ENCODE measurements at regions of chr3 and their contacts with region 1.

Region 1: DNA sequence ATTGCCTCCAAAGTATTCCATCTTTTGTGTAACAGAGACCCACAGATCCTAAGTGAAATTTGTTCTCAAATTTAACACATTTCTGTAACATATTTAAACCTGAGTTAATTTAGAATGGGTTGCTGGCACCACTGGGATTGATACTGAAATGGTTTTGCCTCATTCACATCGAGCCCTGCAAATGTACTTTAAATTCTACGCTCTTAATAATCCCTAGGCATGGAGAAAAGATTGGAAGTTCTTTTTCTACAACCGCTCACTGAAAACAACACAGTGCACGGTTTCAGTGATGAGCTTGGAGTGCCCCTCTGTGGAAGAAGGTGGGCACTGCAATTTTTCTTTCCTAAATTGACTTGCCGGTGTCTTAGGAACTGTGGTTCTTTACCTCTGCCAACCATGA is 109.9 kb upstream of the ATP11B start:
- DNase-seq: peak; percentile 68
- ATAC-seq: peak; percentile 95
- H3K4me3 ChIP-seq: no peak overlapping the region
- H3K27ac ChIP-seq: no peak overlapping the region
- H3K4me1 ChIP-seq: no peaks in the 10 kb centered on the region
- H3K27me3 ChIP-seq: peaks cover 4% of the 10 kb centered on the region
- CTCF ChIP-seq: peak; percentile 95
- POLR2A ChIP-seq: 0 out of 2 replicates have a peak, but pooled peaks have one; percentile 34
- RAD21 ChIP-seq: peak; percentile 96

Region 2: DNA sequence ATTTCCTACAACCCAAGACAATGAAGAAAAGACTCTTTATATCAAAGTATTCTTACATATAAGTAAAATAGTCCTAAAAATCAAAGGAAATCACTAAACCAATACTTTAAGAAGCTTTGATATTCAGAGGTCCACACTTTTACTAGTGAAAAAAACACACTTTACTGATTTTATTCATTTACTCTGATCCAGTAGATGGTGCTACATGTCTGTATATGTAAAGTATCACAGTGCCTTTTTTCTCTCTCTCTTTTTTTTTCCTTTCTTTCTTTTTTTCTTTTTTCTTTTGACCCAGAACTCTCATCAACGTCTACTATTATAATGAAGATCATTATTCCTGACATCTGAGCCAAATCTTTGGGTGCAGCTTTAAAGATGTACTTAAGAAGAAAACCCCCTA is 1993.4 kb before region 1 on chr3:
- CTCF ChIA-PET with region 1: no interaction called
- POLR2A ChIA-PET with region 1: no interaction called
- dilution Hi-C with region 1: no loop called
- in situ Hi-C with region 1: no loop called
- intact Hi-C with region 1: loop called (anchors 5 kb)
- DNase-seq: no peak
- ATAC-seq: no peak
- H3K4me3 ChIP-seq: no peak overlapping the region
- H3K27ac ChIP-seq: no peak overlapping the region
- H3K4me1 ChIP-seq: no peaks in the 10 kb centered on the region
- H3K27me3 ChIP-seq: no peaks in the 10 kb centered on the region
- CTCF ChIP-seq: no peak
- POLR2A ChIP-seq: no peak
- RAD21 ChIP-seq: no peak

Region 3: GRCh38 chr3:180802837-180803236 is 1880.6 kb before region 1 on chr3:
- CTCF ChIA-PET with region 1: no interaction called
- POLR2A ChIA-PET with region 1: no interaction called
- dilution Hi-C with region 1: no loop called
- in situ Hi-C with region 1: no loop called
- intact Hi-C with region 1: loop called (anchors 1 kb)
- DNase-seq: peak; percentile 4
- ATAC-seq: no peak
- H3K4me3 ChIP-seq: no peak overlapping the region
- H3K27ac ChIP-seq: no peak overlapping the region
- H3K4me1 ChIP-seq: no peaks in the 10 kb centered on the region
- H3K27me3 ChIP-seq: no peaks in the 10 kb centered on the region
- CTCF ChIP-seq: peak; percentile 49
- POLR2A ChIP-seq: no peak
- RAD21 ChIP-seq: peak; percentile 45

Region 4: GRCh38 chr3:180989291-180990163 is 1693.9 kb before region 1 on chr3 and contains the start of gene DNAJC19:
- CTCF ChIA-PET with region 1: no interaction called
- POLR2A ChIA-PET with region 1: no interaction called
- dilution Hi-C with region 1: no loop called
- in situ Hi-C with region 1: no loop called
- intact Hi-C with region 1: loop called (anchors 10 kb)
- DNase-seq: peak; percentile 97
- ATAC-seq: peak; percentile 99
- H3K4me3 ChIP-seq: peak within 1 kb of the TSS; percentile 79
- H3K27ac ChIP-seq: peak within 1 kb of the TSS; percentile 65
- H3K4me1 ChIP-seq: no peaks in the 10 kb centered on the region
- H3K27me3 ChIP-seq: no peaks in the 10 kb centered on the region
- CTCF ChIP-seq: no peak
- POLR2A ChIP-seq: no peak
- RAD21 ChIP-seq: no peak
- total RNA-seq, gene DNAJC19: 16.0 and 20.8 TPM in 2 replicates

Region 5: GRCh38 chr3:181210275-181210674 is 1473.2 kb before region 1 on chr3:
- CTCF ChIA-PET with region 1: no interaction called
- POLR2A ChIA-PET with region 1: no interaction called
- dilution Hi-C with region 1: no loop called
- in situ Hi-C with region 1: loop called (anchors 10 kb)
- intact Hi-C with region 1: loop called (anchors 1 kb)
- DNase-seq: peak; percentile 15
- ATAC-seq: no peak
- H3K4me3 ChIP-seq: no peak overlapping the region
- H3K27ac ChIP-seq: no peak overlapping the region
- H3K4me1 ChIP-seq: no peaks in the 10 kb centered on the region
- H3K27me3 ChIP-seq: no peaks in the 10 kb centered on the region
- CTCF ChIP-seq: 0 out of 2 replicates have a peak, but pooled peaks have one; percentile 30
- POLR2A ChIP-seq: no peak
- RAD21 ChIP-seq: peak; percentile 18; the same call in 1 of the 2 replicates

Region 6: DNA sequence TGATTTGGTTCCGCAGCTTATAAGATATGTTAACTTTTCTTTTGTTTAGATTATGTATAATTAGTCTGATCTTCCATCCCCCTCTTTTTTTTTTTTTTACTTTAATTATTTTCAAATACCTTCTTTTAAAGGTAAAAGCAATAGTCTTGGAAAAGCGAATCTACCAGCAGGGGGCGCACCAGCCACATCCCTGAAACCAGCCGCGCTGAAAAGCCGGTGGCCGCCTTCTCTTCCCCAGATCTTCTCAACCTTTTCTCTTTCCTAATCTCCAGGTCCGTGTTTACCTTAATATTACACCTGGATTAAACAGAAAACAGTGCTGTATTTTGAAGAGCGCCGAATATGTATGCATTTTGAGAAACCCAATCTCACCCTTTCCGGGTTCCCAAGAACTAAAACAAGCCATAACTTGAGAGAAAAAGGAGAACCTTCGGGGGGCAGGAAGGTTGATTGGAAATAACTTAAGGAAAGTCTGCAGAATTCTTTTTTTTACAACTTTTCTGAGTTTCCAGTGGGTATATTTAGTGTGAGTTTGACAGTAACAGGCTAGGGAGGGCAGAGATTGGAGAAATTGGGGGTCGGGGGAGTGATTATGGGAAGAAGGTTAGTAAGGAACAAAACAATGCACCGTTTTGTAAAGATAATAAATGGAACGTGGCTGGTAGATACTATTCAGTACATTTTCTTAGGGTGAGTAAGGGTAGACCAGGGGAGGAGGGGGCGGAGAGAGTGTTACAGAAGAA is 973.7 kb before region 1 on chr3:
- CTCF ChIA-PET with region 1: interaction called, 16 read pairs
- POLR2A ChIA-PET with region 1: no interaction called
- dilution Hi-C with region 1: no loop called
- in situ Hi-C with region 1: loop called (anchors 5 kb)
- intact Hi-C with region 1: loop called (anchors 1 kb)
- DNase-seq: peak; percentile 44
- ATAC-seq: peak; percentile 53; the same call in 1 of the 2 replicates
- H3K4me3 ChIP-seq: no peak overlapping the region
- H3K27ac ChIP-seq: no peak overlapping the region
- H3K4me1 ChIP-seq: no peaks in the 10 kb centered on the region
- H3K27me3 ChIP-seq: peaks cover 47% of the 10 kb centered on the region
- CTCF ChIP-seq: peak; percentile 73
- POLR2A ChIP-seq: no peak
- RAD21 ChIP-seq: peak; percentile 61

Region 7: DNA sequence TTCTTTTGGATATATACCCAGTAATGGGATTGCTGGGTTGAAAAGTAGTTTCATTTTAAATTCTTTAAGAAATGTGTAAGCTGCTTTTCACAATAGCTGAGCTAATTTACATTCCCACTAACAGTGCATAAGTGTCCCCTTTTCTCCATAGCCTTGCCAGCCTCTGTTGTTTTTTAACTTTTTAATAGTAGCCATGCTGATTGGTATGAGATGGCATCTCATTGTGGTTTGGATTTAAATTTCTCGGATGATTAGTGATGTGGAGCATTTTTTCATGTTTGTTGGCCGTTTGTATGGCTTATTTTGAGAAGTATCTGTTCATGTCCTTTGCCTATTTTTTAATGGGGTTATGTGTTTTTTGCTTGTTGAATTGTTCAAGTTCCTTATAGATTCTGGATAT is 334.4 kb before region 1 on chr3:
- CTCF ChIA-PET with region 1: no interaction called
- POLR2A ChIA-PET with region 1: no interaction called
- dilution Hi-C with region 1: no loop called
- in situ Hi-C with region 1: no loop called
- intact Hi-C with region 1: no loop called
- DNase-seq: no peak
- ATAC-seq: no peak
- H3K4me3 ChIP-seq: no peak overlapping the region
- H3K27ac ChIP-seq: no peak overlapping the region
- H3K4me1 ChIP-seq: no peaks in the 10 kb centered on the region
- H3K27me3 ChIP-seq: no peaks in the 10 kb centered on the region
- CTCF ChIP-seq: no peak
- POLR2A ChIP-seq: no peak
- RAD21 ChIP-seq: no peak

Region 8: GRCh38 chr3:183745300-183746098 is 1062.0 kb after region 1 on chr3:
- CTCF ChIA-PET with region 1: no interaction called
- POLR2A ChIA-PET with region 1: no interaction called
- dilution Hi-C with region 1: no loop called
- in situ Hi-C with region 1: no loop called
- intact Hi-C with region 1: no loop called
- DNase-seq: peak; percentile 38
- ATAC-seq: peak; percentile 94
- H3K4me3 ChIP-seq: no peak overlapping the region
- H3K27ac ChIP-seq: peak overlapping the region; percentile 48; the same call in 1 of the 2 replicates
- H3K4me1 ChIP-seq: no peaks in the 10 kb centered on the region; the same call in 1 of the 2 replicates
- H3K27me3 ChIP-seq: no peaks in the 10 kb centered on the region
- CTCF ChIP-seq: no peak
- POLR2A ChIP-seq: no peak
- RAD21 ChIP-seq: no peak

Measured in IMR-90 (cell line).